ENCODE measurements at regions of chr4 and their contacts with region 1.

Region 1: DNA sequence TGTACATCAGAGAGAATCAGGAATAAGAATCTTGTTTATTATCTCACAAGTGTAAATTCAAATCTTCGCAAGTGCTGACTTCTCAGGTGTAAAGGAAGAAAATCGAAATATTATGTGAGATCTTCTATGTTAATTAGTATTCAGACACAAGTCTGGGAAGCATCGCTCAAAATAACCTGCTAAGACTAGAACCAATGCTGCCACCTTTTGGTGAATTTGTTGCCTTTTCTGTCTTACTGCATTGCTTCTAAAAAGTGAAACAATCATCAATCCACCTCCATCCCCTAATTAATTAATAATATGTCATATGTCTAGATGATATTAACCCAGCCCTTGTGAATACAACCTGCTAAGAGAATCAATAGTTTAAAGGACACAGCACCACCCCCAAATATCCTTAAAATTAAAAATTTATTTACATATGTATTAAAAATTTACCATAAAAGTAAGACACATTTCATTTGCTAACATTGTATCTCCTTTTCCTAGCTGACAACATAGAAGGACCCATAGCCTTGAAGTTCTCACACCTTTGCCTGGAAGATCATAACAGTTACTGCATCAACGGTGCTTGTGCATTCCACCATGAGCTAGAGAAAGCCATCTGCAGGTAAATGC is 3.5 kb downstream of the EPGN start:
- DNase-seq: peak in 1 of 4 donors; percentile 51
- ATAC-seq: peak; percentile 76
- H3K4me3 ChIP-seq: no peak overlapping the region
- H3K27ac ChIP-seq: no peak overlapping the region
- H3K4me1 ChIP-seq: no peaks in the 10 kb centered on the region
- H3K27me3 ChIP-seq: no peaks in the 10 kb centered on the region
- CTCF ChIP-seq: peak; percentile 48 to 50

Region 2: DNA sequence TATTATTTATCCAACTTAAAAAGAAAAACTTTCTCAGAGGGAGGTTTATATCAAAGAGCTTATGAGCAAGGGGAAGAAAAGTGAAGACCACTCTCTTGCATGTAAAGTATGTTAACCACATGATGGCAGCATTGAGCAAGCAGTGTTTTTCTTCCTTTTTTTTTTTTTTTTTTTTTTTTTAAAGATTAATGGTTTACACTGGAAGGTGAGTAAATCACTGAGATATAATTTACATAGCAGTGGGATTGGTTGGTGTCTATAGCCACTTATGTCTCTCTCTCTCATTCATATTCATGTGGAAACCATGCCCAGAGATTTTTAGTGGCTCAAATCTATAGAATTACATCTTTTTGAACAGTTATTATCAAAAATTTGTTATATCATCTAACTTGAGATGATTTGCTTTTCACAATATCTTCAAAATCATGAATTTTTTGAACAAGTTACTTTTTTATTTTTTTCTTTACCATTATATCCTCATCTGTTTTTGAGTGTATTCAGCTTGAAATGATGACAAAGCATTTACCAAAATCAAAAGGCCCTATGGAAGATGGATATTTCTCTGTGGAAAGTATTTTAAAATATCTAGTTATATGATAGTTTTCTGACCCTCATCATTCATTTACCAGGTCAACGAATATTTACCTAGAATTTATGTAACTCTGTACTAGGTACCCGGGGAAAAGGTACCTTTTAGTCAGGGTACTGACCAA is 122.3 kb before region 1 on chr4:
- intact Hi-C with region 1: loop called in 1 of 2 experiments (anchors 10 kb)
- DNase-seq: peak in 2 of 4 donors; percentile 15 to 53
- ATAC-seq: peak; percentile 66
- H3K4me3 ChIP-seq: no peak overlapping the region
- H3K27ac ChIP-seq: no peak overlapping the region
- H3K4me1 ChIP-seq: no peaks in the 10 kb centered on the region
- H3K27me3 ChIP-seq: no peaks in the 10 kb centered on the region
- CTCF ChIP-seq: peak; percentile 43 to 57

Measured in left lung (tissue), 14 donors.